ENCODE measurements at regions of chr22 and their contacts with region 1.

Region 1: GRCh38 chr22:49789289-49790141 is 38.2 kb downstream of the BRD1 start:
- DNase-seq: peak in 3 of 5 donors; percentile 41 to 70 (median 57)
- ATAC-seq: peak in 3 of 4 donors; percentile 40 to 55 (median 51)
- H3K4me3 ChIP-seq: peak overlapping the region in 8 of 12 donors; percentile 1 to 29 (median 14)
- H3K27ac ChIP-seq: peak overlapping the region; percentile 7 to 86 (median 75)
- H3K4me1 ChIP-seq: peaks cover 12 to 75% (median 67%) of the 10 kb centered on the region in 12 donors
- H3K27me3 ChIP-seq: no peaks in the 10 kb centered on the region
- CTCF ChIP-seq: no peak
- POLR2A ChIP-seq: no peak

Region 2: DNA sequence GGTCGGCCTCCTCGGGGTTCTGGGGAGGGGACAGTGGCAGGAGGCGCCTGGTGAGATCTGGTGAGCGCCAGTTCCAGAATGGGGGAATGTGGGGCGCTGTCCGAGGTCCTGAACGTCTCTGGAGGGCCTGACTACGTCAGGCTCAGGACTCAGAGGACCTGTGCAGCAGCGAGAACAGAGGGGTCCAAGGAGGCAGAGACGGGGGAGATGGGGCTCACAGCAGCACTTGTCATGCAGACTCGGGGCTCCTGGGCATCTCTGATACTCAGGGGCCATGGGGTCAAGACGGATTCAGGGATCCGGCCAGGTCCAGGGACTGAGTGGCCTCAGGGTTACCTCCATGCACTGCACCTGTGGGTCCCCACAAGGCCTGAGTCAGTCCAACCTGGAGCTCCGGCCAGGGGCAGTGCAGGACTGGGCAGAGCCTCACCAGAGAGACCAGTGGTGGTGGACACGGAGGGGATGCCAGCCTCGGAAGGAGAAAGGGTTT is 54.1 kb before region 1 on chr22:
- intact Hi-C with region 1: no loop called
- DNase-seq: peak in 1 of 5 donors; percentile 29
- ATAC-seq: peak in 1 of 4 donors; percentile 38
- H3K4me3 ChIP-seq: no peak overlapping the region
- H3K27ac ChIP-seq: no peak overlapping the region
- H3K4me1 ChIP-seq: no peaks in the 10 kb centered on the region
- H3K27me3 ChIP-seq: peaks cover 0 to 50% (median 13%) of the 10 kb centered on the region in 9 donors
- CTCF ChIP-seq: no peak
- POLR2A ChIP-seq: no peak

Region 3: DNA sequence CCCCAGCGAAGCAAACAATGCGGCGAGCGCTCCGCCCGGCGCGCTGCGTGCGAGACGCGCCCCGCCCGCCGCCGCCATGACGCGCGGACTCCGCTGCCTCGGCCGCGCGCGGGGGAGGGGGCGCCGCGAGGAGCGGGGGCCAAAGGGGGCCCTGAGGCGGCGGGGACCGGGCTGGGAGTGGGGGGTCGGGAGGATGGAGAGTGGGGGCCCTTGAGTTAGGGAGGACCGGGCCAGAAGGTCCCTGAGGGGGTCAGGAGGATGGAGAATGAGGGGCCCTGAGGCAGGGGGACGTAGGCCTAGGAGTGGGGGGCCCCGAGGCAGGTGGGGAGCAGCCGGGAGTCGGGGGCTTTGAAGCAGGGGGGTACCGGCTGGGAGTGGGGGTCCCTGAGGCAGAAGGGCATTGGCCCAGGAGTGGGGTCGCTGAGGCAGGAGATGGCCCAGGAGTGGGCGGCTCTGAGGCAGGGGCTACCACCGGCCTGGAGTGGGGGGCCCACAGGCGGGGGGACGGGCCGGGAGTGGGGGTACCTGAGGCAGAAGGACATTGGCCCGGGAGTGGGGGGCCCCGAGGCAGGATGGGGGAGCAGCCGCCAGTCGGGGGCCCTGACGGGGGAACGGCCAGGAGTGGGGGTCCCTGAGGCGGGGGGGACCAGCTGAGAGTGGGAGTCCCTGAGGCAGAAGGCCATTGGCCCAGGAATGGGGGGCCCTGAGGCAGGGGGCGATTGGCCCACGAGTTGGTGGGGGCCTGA is 38.5 kb after region 1 on chr22 and contains the start of gene BRD1:
- intact Hi-C with region 1: loop called in 2 of 10 experiments (anchors 5 kb)
- DNase-seq: peak; percentile 66 to 85 (median 76)
- ATAC-seq: peak in 3 of 4 donors; percentile 73 to 80 (median 77)
- H3K4me3 ChIP-seq: peak within 1 kb of the TSS; percentile 60 to 99 (median 86)
- H3K27ac ChIP-seq: peak within 1 kb of the TSS; percentile 68 to 91 (median 86)
- H3K4me1 ChIP-seq: peaks cover 10 to 33% (median 23%) of the 10 kb centered on the region in 12 donors
- H3K27me3 ChIP-seq: no peaks in the 10 kb centered on the region
- CTCF ChIP-seq: no peak
- POLR2A ChIP-seq: no peak
- total RNA-seq, gene BRD1: 13.9 to 27.0 (median 18.5) TPM

Measured in heart left ventricle (tissue), 16 donors.